Thyroid gland (tissue), 4 donors: ENCODE measurements at regions of chr17 and their contacts with region 1.

Region 1: GRCh38 chr17:2707721-2708584 is 3.6 kb downstream of the CLUH start:
- DNase-seq: peak; percentile 53 to 57
- H3K4me3 ChIP-seq: no peak overlapping the region
- H3K27ac ChIP-seq: peak overlapping the region in 1 of 3 donors; percentile 10
- H3K4me1 ChIP-seq: peaks cover 41 to 43% of the 10 kb centered on the region in 2 donors
- H3K27me3 ChIP-seq: no peaks in the 10 kb centered on the region
- CTCF ChIP-seq: peak in 4 of 6 experiments; percentile 17 to 39 (median 26)
- POLR2A ChIP-seq: no peak

Region 2: DNA sequence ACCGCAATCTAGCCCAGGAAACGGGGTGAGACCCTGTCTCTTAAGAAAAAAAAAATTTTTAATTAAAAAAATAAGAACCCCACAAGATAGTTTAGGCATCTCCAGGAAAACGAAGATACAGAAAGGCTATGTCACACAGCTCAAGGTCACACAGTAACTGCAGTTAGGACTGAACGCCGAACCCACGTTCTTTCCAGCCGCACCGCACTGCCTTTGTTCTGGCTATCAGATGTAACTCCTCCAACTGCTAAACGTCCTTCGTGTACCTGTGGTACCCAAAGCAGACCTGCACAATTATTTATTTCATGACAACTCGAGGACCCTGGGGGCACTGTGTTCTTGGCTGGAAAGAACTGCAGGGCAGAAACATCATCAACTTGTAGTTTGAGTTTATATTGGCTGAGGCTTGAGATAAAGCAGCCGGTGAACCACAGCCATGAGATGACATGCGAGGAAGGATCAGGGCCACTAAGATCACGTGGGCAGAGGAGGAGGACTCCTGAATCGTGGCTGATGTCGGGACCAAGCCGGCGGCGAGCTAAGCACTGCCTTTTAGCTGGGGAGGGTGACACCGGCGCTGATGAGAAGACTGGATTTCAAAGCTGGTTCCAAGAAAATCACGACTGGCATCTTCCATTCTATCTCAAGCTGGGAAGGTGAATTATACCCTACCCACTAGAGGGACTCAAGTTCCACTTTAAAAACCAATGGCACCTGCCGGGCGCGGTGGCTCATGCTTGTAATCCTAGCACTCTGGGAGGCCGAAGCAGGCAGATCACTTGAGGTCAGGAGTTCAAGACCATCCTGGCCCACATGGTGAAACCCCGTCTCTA is 286.4 kb before region 1 on chr17:
- intact Hi-C with region 1: loop called (anchors 10 kb)
- DNase-seq: peak; percentile 67 to 70
- H3K4me3 ChIP-seq: no peak overlapping the region
- H3K27ac ChIP-seq: no peak overlapping the region
- H3K4me1 ChIP-seq: peaks cover 0 to 7% of the 10 kb centered on the region in 2 donors
- H3K27me3 ChIP-seq: no peaks in the 10 kb centered on the region
- CTCF ChIP-seq: peak in 4 of 6 experiments; percentile 36 to 48 (median 36)
- POLR2A ChIP-seq: no peak

Region 3: GRCh38 chr17:2672026-2672425 is 35.9 kb before region 1 on chr17:
- intact Hi-C with region 1: no loop called
- DNase-seq: no peak
- H3K4me3 ChIP-seq: no peak overlapping the region
- H3K27ac ChIP-seq: no peak overlapping the region
- H3K4me1 ChIP-seq: no peaks in the 10 kb centered on the region
- H3K27me3 ChIP-seq: no peaks in the 10 kb centered on the region
- CTCF ChIP-seq: no peak
- POLR2A ChIP-seq: no peak

Region 4: DNA sequence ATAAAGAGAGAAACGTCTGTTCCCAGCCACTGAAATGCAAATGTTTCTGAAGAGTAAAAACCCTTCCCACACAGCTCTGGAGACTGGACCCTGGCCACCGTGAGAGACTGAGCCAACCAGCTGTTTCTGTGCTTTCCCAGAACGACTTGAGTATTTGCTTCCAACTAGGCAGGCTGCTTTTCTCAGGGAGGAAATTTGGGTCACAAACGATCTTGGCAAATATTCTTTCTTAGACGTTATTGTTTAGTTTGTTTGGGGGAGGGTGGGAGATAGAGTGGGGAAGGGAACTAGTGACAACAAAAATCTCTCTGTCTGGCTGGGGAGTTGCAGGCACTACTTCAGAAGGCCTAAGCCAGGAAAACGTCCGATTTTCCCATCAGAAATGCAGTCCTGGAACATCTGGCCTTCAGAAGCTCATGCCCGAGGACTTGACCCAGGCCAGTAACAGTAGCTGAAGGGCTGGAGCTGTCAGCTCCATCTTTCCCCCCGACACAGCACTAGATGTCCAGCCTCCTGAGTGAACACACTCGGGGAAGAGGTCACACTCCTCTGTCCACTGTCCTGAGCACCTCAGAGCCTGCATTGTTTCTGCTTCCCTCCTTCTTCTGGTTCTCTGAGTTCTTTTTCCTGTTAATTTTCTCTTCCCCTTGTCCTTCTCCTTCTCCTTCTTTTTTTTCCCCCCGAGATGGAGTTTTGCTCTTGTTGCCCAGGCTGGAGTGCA is 37.5 kb after region 1 on chr17:
- intact Hi-C with region 1: no loop called
- DNase-seq: no peak
- H3K4me3 ChIP-seq: no peak overlapping the region
- H3K27ac ChIP-seq: no peak overlapping the region
- H3K4me1 ChIP-seq: peaks cover 0 to 7% of the 10 kb centered on the region in 2 donors
- H3K27me3 ChIP-seq: no peaks in the 10 kb centered on the region
- CTCF ChIP-seq: no peak
- POLR2A ChIP-seq: no peak

Region 5: GRCh38 chr17:2758870-2759269 is 50.9 kb after region 1 on chr17:
- intact Hi-C with region 1: no loop called
- DNase-seq: no peak
- H3K4me3 ChIP-seq: no peak overlapping the region
- H3K27ac ChIP-seq: no peak overlapping the region
- H3K4me1 ChIP-seq: peaks cover 0 to 11% of the 10 kb centered on the region in 2 donors
- H3K27me3 ChIP-seq: no peaks in the 10 kb centered on the region
- CTCF ChIP-seq: no peak
- POLR2A ChIP-seq: no peak